ENCODE measurements at regions of chr15 and their contacts with region 1.

Region 1: DNA sequence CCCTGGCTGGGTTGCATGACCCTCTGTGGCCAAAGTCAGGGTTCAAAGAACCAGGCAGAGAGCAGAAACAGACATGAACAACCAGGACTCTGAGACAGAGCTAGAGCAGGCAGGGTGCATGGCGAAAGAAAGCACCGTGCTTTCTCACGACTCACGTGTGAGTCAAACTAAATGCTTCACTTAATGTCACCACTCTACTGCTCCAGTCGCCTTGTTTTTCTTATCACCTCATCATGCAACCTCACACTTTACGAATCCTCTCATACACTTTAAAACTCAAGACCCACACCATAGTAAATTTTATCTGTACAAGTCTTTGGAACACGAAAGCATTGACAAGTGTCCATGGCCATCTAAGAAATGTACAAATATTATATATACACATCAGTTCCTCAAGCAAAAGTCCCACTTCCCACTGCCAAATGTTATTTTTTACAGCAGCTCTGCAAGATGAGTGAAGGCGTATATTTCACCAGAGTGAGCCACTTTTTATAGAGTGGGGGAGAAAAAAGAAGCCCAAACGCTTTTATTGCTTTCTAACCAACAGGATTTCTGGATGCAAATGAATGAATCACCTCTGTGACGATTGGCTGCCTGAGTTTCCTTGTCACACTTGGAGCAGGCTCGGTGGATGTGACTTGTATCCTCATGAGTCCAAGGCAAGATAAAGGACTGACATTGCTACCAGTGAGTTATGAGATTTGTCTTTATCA is 15.9 kb upstream of the MEGF11 start:
- DNase-seq: peak; percentile 71
- ATAC-seq: peak; percentile 81
- H3K4me3 ChIP-seq: no peak overlapping the region
- H3K27ac ChIP-seq: no peak overlapping the region
- H3K4me1 ChIP-seq: no peaks in the 10 kb centered on the region
- H3K27me3 ChIP-seq: peaks cover 30% of the 10 kb centered on the region
- CTCF ChIP-seq: no peak
- POLR2A ChIP-seq: no peak
- RAD21 ChIP-seq: no peak

Region 2: DNA sequence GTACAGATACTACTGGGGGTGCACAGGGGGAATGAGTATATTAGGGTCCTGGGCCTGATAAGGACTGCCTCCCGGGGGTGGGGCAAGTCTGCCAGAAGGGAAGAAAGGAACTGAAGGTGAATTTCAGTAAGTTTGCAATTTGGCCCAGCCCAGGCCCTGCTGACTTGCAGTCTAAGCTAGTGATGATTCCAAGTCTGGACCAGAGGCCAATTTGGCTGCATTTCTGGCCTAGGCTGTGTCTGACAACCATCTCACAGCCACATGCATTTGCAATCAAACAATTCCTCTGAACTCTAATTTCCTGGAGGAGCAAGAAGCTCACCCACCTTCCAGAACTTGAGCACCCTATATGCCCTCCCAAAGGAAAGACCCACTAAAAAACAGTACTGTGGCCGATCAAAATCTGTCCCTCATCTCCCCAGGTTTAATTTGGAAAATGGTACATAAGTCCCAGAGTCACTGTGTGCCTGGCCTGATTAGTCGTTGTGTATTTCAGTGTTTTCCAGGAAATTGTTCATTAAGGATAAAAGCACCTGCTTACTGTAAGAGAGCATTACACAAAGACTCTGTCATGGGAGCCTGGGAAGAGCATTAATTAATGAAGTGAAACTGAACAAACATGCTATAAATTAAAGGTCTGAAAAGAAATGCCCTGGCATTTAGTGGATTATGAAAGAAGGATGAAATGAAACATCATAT is 130.4 kb before region 1 on chr15:
- CTCF ChIA-PET with region 1: no interaction called
- POLR2A ChIA-PET with region 1: no interaction called
- dilution Hi-C with region 1: no loop called
- in situ Hi-C with region 1: no loop called
- intact Hi-C with region 1: no loop called
- DNase-seq: no peak
- ATAC-seq: no peak
- H3K4me3 ChIP-seq: no peak overlapping the region
- H3K27ac ChIP-seq: no peak overlapping the region
- H3K4me1 ChIP-seq: no peaks in the 10 kb centered on the region
- H3K27me3 ChIP-seq: peaks cover 68% of the 10 kb centered on the region
- CTCF ChIP-seq: no peak
- POLR2A ChIP-seq: no peak
- RAD21 ChIP-seq: no peak

Region 3: GRCh38 chr15:66202526-66202925 is 67.0 kb before region 1 on chr15:
- CTCF ChIA-PET with region 1: no interaction called
- POLR2A ChIA-PET with region 1: no interaction called
- dilution Hi-C with region 1: no loop called
- in situ Hi-C with region 1: no loop called
- intact Hi-C with region 1: loop called (anchors 10 kb)
- DNase-seq: no peak
- ATAC-seq: no peak
- H3K4me3 ChIP-seq: no peak overlapping the region
- H3K27ac ChIP-seq: no peak overlapping the region
- H3K4me1 ChIP-seq: no peaks in the 10 kb centered on the region
- H3K27me3 ChIP-seq: peaks cover 15% of the 10 kb centered on the region
- CTCF ChIP-seq: no peak
- POLR2A ChIP-seq: no peak
- RAD21 ChIP-seq: no peak

Region 4: DNA sequence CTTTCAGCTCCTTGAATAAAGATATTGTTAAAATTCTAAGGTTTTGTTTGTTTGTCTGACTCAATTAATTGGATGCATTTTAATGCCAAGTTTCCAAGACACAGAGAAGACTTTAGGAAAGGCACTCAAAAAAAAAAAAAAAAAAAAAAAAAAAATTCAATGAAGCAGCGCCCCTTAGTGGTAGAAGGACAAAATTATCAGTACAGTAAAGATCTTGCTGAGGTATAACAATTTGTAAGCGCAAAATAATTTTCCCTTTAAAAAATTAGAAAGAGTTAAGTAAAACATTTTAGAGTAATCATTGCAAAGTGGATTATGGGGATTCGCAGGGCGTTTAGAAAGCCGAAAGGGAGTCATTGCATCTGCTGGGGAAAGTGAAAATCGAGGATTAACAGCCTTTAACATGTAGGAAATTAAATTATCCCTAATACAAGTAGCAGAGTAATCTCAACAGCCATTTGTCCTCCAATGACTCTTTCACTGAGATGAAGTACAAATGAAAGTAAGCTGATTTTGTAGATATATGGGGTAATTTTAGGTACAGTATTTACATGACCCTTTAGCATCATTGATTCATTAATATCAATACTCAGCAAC is 18.1 kb after region 1 on chr15:
- CTCF ChIA-PET with region 1: no interaction called
- POLR2A ChIA-PET with region 1: no interaction called
- dilution Hi-C with region 1: no loop called
- in situ Hi-C with region 1: no loop called
- intact Hi-C with region 1: no loop called
- DNase-seq: peak; percentile 14
- ATAC-seq: no peak
- H3K4me3 ChIP-seq: no peak overlapping the region
- H3K27ac ChIP-seq: no peak overlapping the region
- H3K4me1 ChIP-seq: peaks cover 5% of the 10 kb centered on the region; the same call in 1 of the 2 replicates
- H3K27me3 ChIP-seq: peaks cover 5% of the 10 kb centered on the region
- CTCF ChIP-seq: peak; percentile 60
- POLR2A ChIP-seq: no peak
- RAD21 ChIP-seq: peak; percentile 43

Measured in IMR-90 (cell line).